MCF 10A (cell line): ENCODE measurements at regions of chr16 and their contacts with region 1.

Region 1: GRCh38 chr16:70298988-70299938 is at the start of gene DDX19B:
- DNase-seq: peak; percentile 56
- H3K4me3 Mint-ChIP-seq: peak within 1 kb of the TSS; percentile 89
- H3K27ac Mint-ChIP-seq: peak within 1 kb of the TSS; percentile 98
- H3K4me1 Mint-ChIP-seq: peaks cover 5% of the 10 kb centered on the region
- H3K27me3 Mint-ChIP-seq: no peaks in the 10 kb centered on the region
- CTCF ChIP-seq: no peak
- total RNA-seq, gene DDX19B: 38.6 and 38.8 TPM in 2 replicates

Region 2: GRCh38 chr16:69315486-69316311 is 983.6 kb before region 1 on chr16:
- CTCF ChIA-PET with region 1: no interaction called
- POLR2A ChIA-PET with region 1: no interaction called
- intact Hi-C with region 1: no loop called
- DNase-seq: no peak
- H3K4me3 Mint-ChIP-seq: no peak overlapping the region
- H3K27ac Mint-ChIP-seq: no peak overlapping the region
- H3K4me1 Mint-ChIP-seq: peaks cover 16% of the 10 kb centered on the region
- H3K27me3 Mint-ChIP-seq: no peaks in the 10 kb centered on the region
- CTCF ChIP-seq: no peak

Region 3: DNA sequence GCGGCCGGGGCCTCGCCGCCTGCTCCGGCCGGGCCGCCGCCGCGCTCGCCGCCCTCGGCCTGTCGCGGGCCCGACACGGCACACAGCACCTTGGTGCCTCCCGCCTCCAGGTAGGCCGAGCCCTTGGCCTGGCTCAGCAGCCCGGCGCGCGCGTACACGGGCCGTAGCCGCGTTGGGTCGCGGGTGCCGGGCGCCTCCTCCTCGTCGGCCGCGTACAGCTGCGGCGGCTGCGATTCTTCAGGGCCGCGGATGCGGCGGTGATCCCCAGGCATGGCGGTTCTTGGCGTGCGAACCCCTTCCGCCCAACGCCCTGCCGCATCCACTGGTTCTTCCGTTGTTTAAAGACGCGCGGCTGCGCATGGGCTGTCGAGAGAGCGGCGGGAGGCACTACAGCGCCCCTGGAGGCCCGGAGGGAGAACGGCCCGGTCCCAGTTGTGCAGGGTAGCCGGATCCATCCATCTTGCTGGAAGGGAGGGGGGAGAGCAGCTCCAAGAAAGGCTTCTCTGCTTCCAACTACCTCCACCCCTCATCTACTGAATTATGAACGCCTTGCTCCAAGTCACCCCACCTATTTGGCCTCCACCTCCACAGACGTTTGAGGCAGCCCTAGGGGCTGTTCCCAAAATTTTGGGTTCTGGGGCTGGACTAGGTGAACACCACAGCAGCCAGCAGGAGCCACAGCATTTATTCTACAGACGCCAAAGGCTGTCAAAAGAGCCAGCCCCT is 47.5 kb before region 1 on chr16 and contains the start of gene EXOSC6:
- CTCF ChIA-PET with region 1: no interaction called
- POLR2A ChIA-PET with region 1: interaction called, 16 read pairs
- intact Hi-C with region 1: no loop called
- DNase-seq: peak; percentile 93
- H3K4me3 Mint-ChIP-seq: peak within 1 kb of the TSS; percentile 79
- H3K27ac Mint-ChIP-seq: peak within 1 kb of the TSS; percentile 83
- H3K4me1 Mint-ChIP-seq: no peaks in the 10 kb centered on the region
- H3K27me3 Mint-ChIP-seq: no peaks in the 10 kb centered on the region
- CTCF ChIP-seq: peak; percentile 90
- total RNA-seq, gene EXOSC6: 49.8 and 83.9 TPM in 2 replicates

Region 4: DNA sequence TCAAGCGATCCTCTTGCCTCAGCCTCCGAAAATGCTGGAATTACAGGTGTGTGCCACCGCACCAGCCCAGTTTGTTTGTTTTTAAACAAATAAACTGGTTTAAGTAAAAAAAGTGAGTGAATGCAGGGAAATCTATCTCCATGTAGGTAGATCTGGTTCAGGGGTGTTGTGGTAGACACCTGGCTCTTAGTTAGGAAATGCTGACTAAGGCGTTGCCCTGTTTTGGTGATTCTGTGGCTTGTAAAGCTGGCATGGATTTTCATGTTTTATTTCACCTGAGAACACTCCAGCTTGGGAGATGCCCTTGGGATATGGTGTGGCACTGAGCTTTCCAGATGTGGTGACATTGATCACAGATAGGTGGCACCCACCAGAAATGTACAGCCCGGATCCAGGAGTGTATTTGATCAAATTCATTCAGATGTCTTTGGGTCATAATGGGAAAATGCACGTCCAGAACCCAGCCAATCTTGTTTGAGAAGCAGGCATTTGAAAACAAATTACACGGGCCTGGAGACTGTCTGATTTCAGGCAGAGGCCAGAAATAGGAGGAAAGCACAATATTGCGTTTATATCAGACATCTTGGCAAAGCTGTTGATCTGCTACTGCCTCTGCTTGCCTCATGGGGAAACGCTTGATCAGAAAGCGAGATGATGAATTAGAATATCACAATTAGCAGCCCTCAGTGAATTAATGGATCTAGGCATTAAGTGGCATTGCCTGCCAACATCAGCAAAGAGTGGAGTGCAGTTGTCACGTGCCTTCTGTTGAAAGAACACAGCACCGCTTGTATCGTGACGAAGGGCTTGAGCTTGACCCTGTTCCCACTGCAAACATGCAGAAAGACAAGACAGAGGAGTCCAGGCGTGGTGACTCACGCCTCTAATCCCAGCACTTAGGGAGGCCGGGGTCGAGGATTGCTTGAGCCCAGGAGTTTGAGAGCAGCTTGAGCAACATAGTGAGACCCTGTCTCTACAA is 339.8 kb after region 1 on chr16:
- CTCF ChIA-PET with region 1: no interaction called
- POLR2A ChIA-PET with region 1: no interaction called
- intact Hi-C with region 1: no loop called
- DNase-seq: peak; percentile 28
- H3K4me3 Mint-ChIP-seq: no peak overlapping the region
- H3K27ac Mint-ChIP-seq: no peak overlapping the region
- H3K4me1 Mint-ChIP-seq: no peaks in the 10 kb centered on the region
- H3K27me3 Mint-ChIP-seq: no peaks in the 10 kb centered on the region
- CTCF ChIP-seq: no peak

Region 5: GRCh38 chr16:70800781-70801530 is 501.7 kb after region 1 on chr16 and contains the start of gene VAC14:
- CTCF ChIA-PET with region 1: no interaction called
- POLR2A ChIA-PET with region 1: no interaction called
- intact Hi-C with region 1: no loop called
- DNase-seq: peak; percentile 91
- H3K4me3 Mint-ChIP-seq: peak within 1 kb of the TSS; percentile 77
- H3K27ac Mint-ChIP-seq: peak within 1 kb of the TSS; percentile 87
- H3K4me1 Mint-ChIP-seq: peaks cover 32% of the 10 kb centered on the region
- H3K27me3 Mint-ChIP-seq: no peaks in the 10 kb centered on the region
- CTCF ChIP-seq: no peak
- total RNA-seq, gene VAC14: 25.5 and 47.9 TPM in 2 replicates